ENCODE measurements at regions of chr1 and their contacts with region 1.

Region 1: DNA sequence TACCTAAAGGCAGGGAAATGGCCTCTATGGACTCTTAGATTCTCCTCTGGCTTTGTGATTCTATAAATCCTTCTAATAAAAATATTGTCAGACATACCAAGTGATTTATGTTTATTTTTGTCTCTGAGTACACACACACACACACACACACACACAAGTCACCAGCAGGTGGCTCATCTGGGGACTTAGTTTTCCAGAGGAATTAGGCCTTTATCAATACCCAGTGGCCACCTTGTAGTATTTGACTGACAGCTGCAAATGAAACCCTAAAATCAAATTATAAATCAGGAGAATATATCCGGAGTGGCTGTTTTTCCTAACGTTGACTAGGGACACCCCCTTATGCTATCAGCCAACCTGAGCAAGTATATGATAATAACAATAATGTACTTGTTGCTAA is 258.5 kb downstream of the BRINP2 start:
- DNase-seq: no peak
- H3K4me3 ChIP-seq: no peak overlapping the region
- H3K4me3 Mint-ChIP-seq: no peak overlapping the region
- H3K27ac Mint-ChIP-seq: no peak overlapping the region
- H3K4me1 ChIP-seq: no peaks in the 10 kb centered on the region
- H3K4me1 Mint-ChIP-seq: no peaks in the 10 kb centered on the region
- H3K27me3 ChIP-seq: no peaks in the 10 kb centered on the region; the same call in 1 of the 2 replicates
- H3K27me3 Mint-ChIP-seq: peaks cover 8% of the 10 kb centered on the region
- CTCF ChIP-seq: peak in 1 of 2 experiments; percentile 31

Region 2: DNA sequence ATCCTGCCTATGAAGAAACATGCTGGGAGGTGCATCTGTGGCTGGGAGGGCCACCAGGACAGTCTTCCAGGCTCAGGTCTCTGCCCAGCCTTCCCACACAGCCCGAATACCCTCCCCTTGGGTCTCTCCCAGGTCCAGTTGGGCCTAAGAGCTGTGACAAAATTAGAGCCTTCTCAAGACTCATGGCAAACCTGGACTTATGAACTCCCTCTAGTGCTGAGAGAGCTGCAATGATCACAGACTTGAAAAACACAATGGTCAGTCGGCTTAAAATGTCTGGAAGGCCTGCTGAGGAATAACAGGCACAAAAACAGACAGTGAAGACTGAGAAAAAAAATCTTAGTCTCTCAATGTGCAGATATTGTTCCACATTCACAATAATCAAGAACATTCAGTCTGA is 66.6 kb after region 1 on chr1:
- CTCF ChIA-PET with region 1: no interaction called
- POLR2A ChIA-PET with region 1: no interaction called
- intact Hi-C with region 1: loop called (anchors 5 kb)
- DNase-seq: peak in 1 of 2 experiments; percentile 3
- H3K4me3 ChIP-seq: no peak overlapping the region
- H3K4me3 Mint-ChIP-seq: no peak overlapping the region
- H3K27ac Mint-ChIP-seq: no peak overlapping the region
- H3K4me1 ChIP-seq: no peaks in the 10 kb centered on the region
- H3K4me1 Mint-ChIP-seq: no peaks in the 10 kb centered on the region
- H3K27me3 ChIP-seq: no peaks in the 10 kb centered on the region
- H3K27me3 Mint-ChIP-seq: no peaks in the 10 kb centered on the region
- CTCF ChIP-seq: peak in 1 of 2 experiments; percentile 40

Region 3: GRCh38 chr1:177780096-177780700 is 350.9 kb after region 1 on chr1:
- CTCF ChIA-PET with region 1: interaction called, 3 read pairs
- POLR2A ChIA-PET with region 1: no interaction called
- intact Hi-C with region 1: loop called (anchors 5 kb)
- DNase-seq: peak in 1 of 2 experiments; percentile 42
- H3K4me3 ChIP-seq: no peak overlapping the region
- H3K4me3 Mint-ChIP-seq: no peak overlapping the region
- H3K27ac Mint-ChIP-seq: no peak overlapping the region
- H3K4me1 ChIP-seq: no peaks in the 10 kb centered on the region
- H3K4me1 Mint-ChIP-seq: no peaks in the 10 kb centered on the region
- H3K27me3 ChIP-seq: no peaks in the 10 kb centered on the region; the same call in 1 of the 2 replicates
- H3K27me3 Mint-ChIP-seq: peaks cover 14% of the 10 kb centered on the region
- CTCF ChIP-seq: peak; percentile 60 to 66

Measured in Caco-2 (cell line).